ENCODE measurements at regions of chr16 and their contacts with region 1.

Region 1: GRCh38 chr16:28291873-28292660 is at the start of gene SBK1:
- DNase-seq: peak; percentile 91
- ATAC-seq: peak; percentile 94
- H3K4me3 Mint-ChIP-seq: peak within 1 kb of the TSS; percentile 84
- H3K27ac Mint-ChIP-seq: peak within 1 kb of the TSS; percentile 93
- H3K4me1 Mint-ChIP-seq: peaks cover 51% of the 10 kb centered on the region
- H3K27me3 Mint-ChIP-seq: no peaks in the 10 kb centered on the region
- total RNA-seq, gene SBK1: 6.5 to 6.6 TPM

Region 2: GRCh38 chr16:27839419-27839818 is 452.6 kb before region 1 on chr16:
- CTCF ChIA-PET with region 1: no interaction called
- POLR2A ChIA-PET with region 1: no interaction called
- intact Hi-C with region 1: no loop called
- DNase-seq: no peak
- ATAC-seq: no peak
- H3K4me3 Mint-ChIP-seq: no peak overlapping the region
- H3K27ac Mint-ChIP-seq: no peak overlapping the region
- H3K4me1 Mint-ChIP-seq: no peaks in the 10 kb centered on the region
- H3K27me3 Mint-ChIP-seq: peaks cover 11% of the 10 kb centered on the region

Region 3: DNA sequence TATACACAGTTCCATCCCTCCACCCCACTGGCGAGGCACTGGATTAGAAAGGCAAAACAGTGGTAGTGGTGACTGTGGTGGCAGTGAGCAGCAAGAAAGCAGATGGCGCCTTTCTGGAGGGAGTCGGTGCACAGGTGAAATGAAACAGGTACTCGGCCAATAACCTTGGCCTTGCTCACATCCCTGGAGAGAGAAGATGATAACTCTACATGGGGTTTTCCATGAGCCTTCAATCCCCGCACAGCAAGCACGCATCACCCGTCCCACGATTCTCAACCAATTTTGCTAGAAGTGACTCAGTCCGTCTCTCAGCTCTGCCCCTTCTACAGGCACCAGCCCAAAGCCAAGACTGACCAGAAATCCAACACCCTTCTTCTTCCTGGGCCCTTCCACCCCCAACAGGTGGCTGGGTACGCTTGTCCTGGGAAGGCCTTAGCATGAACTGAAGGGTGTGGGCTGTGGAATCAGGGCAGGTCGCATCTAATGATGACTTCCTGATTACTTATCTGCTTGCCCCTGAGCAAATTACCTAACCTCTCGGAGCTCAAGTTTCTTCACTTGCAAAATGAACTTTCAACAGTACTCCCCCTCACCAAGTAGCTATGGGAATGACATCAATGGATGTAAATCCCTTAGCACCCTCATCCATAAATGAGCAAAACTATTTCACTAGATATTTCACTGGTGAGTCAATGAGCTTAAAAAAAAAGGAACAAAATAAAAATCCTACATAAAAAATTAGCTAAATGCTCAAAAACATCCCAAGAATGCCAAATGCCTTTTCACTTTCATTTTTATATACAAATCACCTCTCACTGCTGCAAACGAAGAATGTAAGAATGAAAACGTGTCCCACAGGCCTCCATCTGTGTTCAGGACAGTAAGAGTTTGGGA is 98.3 kb before region 1 on chr16:
- CTCF ChIA-PET with region 1: no interaction called
- POLR2A ChIA-PET with region 1: no interaction called
- intact Hi-C with region 1: loop called in 1 of 2 experiments (anchors 5 kb)
- DNase-seq: peak; percentile 78
- ATAC-seq: peak; percentile 67
- H3K4me3 Mint-ChIP-seq: peak overlapping the region; percentile 66
- H3K27ac Mint-ChIP-seq: peak overlapping the region; percentile 92
- H3K4me1 Mint-ChIP-seq: peaks cover 81% of the 10 kb centered on the region
- H3K27me3 Mint-ChIP-seq: no peaks in the 10 kb centered on the region

Region 4: GRCh38 chr16:28250999-28251398 is 41.1 kb before region 1 on chr16:
- CTCF ChIA-PET with region 1: no interaction called
- POLR2A ChIA-PET with region 1: no interaction called
- intact Hi-C with region 1: loop called in 1 of 2 experiments (anchors 5 kb)
- DNase-seq: no peak
- ATAC-seq: no peak
- H3K4me3 Mint-ChIP-seq: no peak overlapping the region
- H3K27ac Mint-ChIP-seq: no peak overlapping the region
- H3K4me1 Mint-ChIP-seq: no peaks in the 10 kb centered on the region
- H3K27me3 Mint-ChIP-seq: no peaks in the 10 kb centered on the region

Region 5: GRCh38 chr16:28277537-28278388 is 14.3 kb before region 1 on chr16:
- CTCF ChIA-PET with region 1: interaction called, 12 read pairs
- POLR2A ChIA-PET with region 1: no interaction called
- intact Hi-C with region 1: loop called in 1 of 2 experiments (anchors 1 kb)
- DNase-seq: peak; percentile 91
- ATAC-seq: peak; percentile 85
- H3K4me3 Mint-ChIP-seq: peak overlapping the region; percentile 60
- H3K27ac Mint-ChIP-seq: peak overlapping the region; percentile 38
- H3K4me1 Mint-ChIP-seq: peaks cover 35% of the 10 kb centered on the region
- H3K27me3 Mint-ChIP-seq: peaks cover 4% of the 10 kb centered on the region

Region 6: GRCh38 chr16:28309811-28310311 is 17.8 kb after region 1 on chr16:
- CTCF ChIA-PET with region 1: interaction called, 3 read pairs
- POLR2A ChIA-PET with region 1: interaction called, 4 read pairs
- intact Hi-C with region 1: loop called (anchors 1 to 2 kb)
- DNase-seq: peak; percentile 92
- ATAC-seq: peak; percentile 91
- H3K4me3 Mint-ChIP-seq: peak overlapping the region; percentile 6
- H3K27ac Mint-ChIP-seq: peak overlapping the region; percentile 91
- H3K4me1 Mint-ChIP-seq: peaks cover 48% of the 10 kb centered on the region
- H3K27me3 Mint-ChIP-seq: no peaks in the 10 kb centered on the region

Region 7: GRCh38 chr16:28317040-28317880 is 25.2 kb after region 1 on chr16:
- CTCF ChIA-PET with region 1: interaction called, 7 read pairs
- POLR2A ChIA-PET with region 1: no interaction called
- intact Hi-C with region 1: loop called in 1 of 2 experiments (anchors 1 kb)
- DNase-seq: peak; percentile 88
- ATAC-seq: peak; percentile 83
- H3K4me3 Mint-ChIP-seq: no peak overlapping the region
- H3K27ac Mint-ChIP-seq: no peak overlapping the region
- H3K4me1 Mint-ChIP-seq: peaks cover 21% of the 10 kb centered on the region
- H3K27me3 Mint-ChIP-seq: no peaks in the 10 kb centered on the region

Region 8: DNA sequence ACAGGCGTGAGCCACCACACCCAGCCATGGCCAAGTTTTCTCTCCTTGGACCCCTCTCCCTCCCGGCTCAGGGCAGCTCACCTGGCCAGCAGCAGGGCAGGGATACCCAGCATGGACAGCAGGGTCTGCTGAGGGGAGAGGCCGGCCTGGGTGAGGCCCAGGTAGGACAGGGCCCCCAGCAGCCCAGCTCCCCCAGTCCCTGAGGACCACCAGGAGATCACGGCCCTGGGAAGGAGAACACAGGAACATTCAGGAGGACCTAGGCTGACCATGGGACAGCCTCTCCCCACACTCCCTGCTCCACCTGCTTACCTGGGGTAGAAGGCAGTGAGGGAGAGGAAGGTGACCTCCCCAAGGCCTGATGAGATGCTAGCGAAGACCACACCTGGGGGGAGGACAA is 194.2 kb after region 1 on chr16:
- CTCF ChIA-PET with region 1: no interaction called
- POLR2A ChIA-PET with region 1: no interaction called
- intact Hi-C with region 1: no loop called
- DNase-seq: no peak
- ATAC-seq: no peak
- H3K4me3 Mint-ChIP-seq: no peak overlapping the region
- H3K27ac Mint-ChIP-seq: no peak overlapping the region
- H3K4me1 Mint-ChIP-seq: peaks cover 23% of the 10 kb centered on the region
- H3K27me3 Mint-ChIP-seq: no peaks in the 10 kb centered on the region